HepG2 (cell line): ENCODE measurements at regions of chr2 and their contacts with region 1.

Region 1: DNA sequence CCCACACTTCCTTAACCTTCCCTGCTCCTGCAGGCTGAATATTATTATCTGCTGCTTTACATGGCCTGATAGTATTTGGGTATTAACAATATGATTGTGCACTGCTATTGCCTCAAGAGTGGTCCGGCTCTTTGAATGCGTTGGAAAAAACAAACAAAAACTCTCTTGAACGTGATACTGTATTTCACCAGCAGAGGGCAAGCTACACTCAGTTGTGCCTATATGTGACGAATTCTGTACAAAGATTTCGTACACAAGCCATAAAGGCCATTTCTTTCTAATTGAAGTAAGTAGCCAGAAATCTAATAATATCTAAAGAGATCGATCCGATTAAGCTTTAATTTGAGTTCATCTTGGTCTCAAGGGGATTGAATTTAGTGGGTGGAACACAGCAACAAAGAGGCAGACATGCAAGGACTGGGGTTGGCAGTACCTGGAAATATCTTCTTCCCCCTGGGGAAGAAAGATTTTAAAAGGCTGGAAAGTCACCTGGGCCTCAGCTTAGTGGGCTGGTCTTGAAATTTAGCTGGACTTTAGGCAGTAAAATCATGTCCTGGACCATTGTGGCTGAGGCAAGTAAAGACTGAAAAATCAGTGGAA is 49.3 kb upstream of the RAB6D start:
- DNase-seq: peak; percentile 61
- ATAC-seq: peak; percentile 92
- H3K4me3 ChIP-seq: no peak overlapping the region
- H3K27ac ChIP-seq: no peak overlapping the region
- H3K4me1 ChIP-seq: 0 out of 2 replicates have a peak, but pooled peaks cover 8% of the 10 kb centered on the region
- H3K27me3 ChIP-seq: peaks cover 0 to 28% of the 10 kb centered on the region in 2 experiments; a peak in 3 of 5 replicates
- CTCF ChIP-seq: peak; percentile 86
- EP300 ChIP-seq: no peak
- POLR2A ChIP-seq: no peak
- RAD21 ChIP-seq: peak; percentile 76

Region 2: DNA sequence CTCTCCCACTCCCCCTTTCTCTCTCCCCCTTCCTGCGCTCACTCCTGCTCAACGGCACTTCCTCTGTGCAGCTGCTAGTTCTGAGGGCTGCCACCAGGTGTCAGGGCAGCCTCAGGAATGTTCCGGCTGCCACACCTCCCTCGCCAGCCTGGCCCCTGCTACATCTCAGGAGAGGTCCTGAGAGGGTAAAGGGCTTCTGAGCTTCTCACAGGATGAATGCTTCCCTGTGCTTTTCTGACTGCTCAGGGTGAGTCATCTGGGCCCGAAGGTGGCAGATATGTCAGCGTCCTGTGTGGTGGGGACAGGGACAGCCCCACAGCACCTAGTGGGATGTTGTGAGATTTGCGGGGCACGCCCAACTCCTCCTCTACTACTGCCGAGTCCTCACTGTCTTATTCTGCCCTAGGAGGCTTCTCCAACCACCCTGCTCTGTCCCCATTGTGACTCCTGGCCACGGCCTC is 259.1 kb before region 1 on chr2:
- CTCF ChIA-PET with region 1: interaction called, 10 read pairs
- POLR2A ChIA-PET with region 1: no interaction called
- in situ Hi-C with region 1: no loop called
- intact Hi-C with region 1: loop called (anchors 2 kb)
- DNase-seq: peak; percentile 70
- ATAC-seq: peak; percentile 85
- H3K4me3 ChIP-seq: no peak overlapping the region
- H3K27ac ChIP-seq: no peak overlapping the region
- H3K4me1 ChIP-seq: peaks cover 33% of the 10 kb centered on the region
- H3K27me3 ChIP-seq: peaks cover 0 to 26% of the 10 kb centered on the region in 2 experiments; a peak in 3 of 5 replicates
- CTCF ChIP-seq: peak; percentile 99
- EP300 ChIP-seq: no peak
- POLR2A ChIP-seq: no peak
- RAD21 ChIP-seq: peak; percentile 96

Region 3: GRCh38 chr2:131445896-131446295 is 32.6 kb after region 1 on chr2:
- CTCF ChIA-PET with region 1: no interaction called
- POLR2A ChIA-PET with region 1: no interaction called
- in situ Hi-C with region 1: no loop called
- intact Hi-C with region 1: no loop called
- DNase-seq: no peak
- ATAC-seq: no peak
- H3K4me3 ChIP-seq: no peak overlapping the region
- H3K27ac ChIP-seq: no peak overlapping the region
- H3K4me1 ChIP-seq: no peaks in the 10 kb centered on the region
- H3K27me3 ChIP-seq: peaks cover 1 to 10% of the 10 kb centered on the region in 2 experiments; a peak in 1 of 5 replicates
- CTCF ChIP-seq: no peak
- EP300 ChIP-seq: no peak
- POLR2A ChIP-seq: no peak
- RAD21 ChIP-seq: no peak

Region 4: DNA sequence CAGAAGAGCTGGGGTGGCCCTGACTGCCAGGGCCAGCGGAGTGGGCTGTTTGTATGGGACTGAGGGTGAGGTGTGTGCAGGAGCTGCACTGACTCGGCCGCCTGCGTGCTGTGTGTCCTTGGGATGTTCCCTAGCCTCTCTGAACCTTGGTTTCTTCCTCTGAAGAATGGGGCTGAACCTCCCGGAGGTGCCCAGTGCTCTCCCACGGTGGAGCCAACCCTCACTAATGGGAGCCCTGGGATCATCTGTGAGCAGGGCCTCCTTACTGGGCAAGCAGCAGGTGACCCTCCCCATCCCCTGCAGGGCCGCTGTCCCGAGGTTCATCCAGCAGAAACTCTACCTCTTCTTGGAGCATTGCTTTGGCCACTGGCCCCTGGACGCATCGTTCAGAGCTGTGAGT is 102.8 kb after region 1 on chr2:
- CTCF ChIA-PET with region 1: no interaction called
- POLR2A ChIA-PET with region 1: no interaction called
- in situ Hi-C with region 1: no loop called
- intact Hi-C with region 1: loop called (anchors 1 kb)
- DNase-seq: no peak
- ATAC-seq: no peak
- H3K4me3 ChIP-seq: no peak overlapping the region
- H3K27ac ChIP-seq: no peak overlapping the region
- H3K4me1 ChIP-seq: no peaks in the 10 kb centered on the region
- H3K27me3 ChIP-seq: no peaks in the 10 kb centered on the region
- CTCF ChIP-seq: no peak
- EP300 ChIP-seq: no peak
- POLR2A ChIP-seq: 0 out of 4 replicates have a peak, but pooled peaks of 1 of the 2 experiments have one; percentile 20
- RAD21 ChIP-seq: no peak